Mucosa of descending colon (tissue), 3 donors: ENCODE measurements at regions of chr2 and their contacts with region 1.

Region 1: GRCh38 chr2:229586746-229587705 is 127.3 kb downstream of the DNER start:
- DNase-seq: peak; percentile 58 to 90 (median 80)
- ATAC-seq: peak; percentile 91
- H3K4me3 ChIP-seq: no peak overlapping the region
- H3K4me1 ChIP-seq: no peaks in the 10 kb centered on the region
- CTCF ChIP-seq: peak; percentile 59

Region 2: DNA sequence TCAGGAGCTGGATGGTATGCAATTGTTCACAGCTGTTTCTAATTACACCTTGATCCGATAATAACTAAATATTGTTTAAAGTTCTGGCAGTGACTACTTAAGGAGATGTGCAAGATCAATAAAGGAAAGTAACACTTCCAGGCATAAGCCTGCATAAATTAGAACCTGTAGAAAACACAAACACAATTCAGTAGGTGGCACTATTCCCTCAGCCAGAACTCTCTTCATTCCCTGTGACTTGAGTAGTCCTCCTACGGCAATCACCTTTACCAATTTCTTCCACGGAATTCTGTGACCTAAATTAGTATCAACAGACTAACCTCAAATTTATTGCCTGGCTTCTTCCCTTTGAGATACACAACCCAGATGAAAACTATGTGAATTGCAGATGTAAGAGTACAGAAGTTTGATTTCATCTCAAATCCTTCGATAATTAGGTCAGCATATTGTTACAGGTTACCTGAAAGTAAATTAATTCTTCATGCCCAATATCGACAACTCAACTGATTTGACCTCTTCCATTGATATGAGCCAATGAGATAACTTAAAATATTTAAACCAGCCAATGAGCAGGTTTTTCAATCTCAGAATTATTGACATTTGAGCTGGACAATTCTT is 453.8 kb before region 1 on chr2:
- intact Hi-C with region 1: loop called in 1 of 2 experiments (anchors 5 kb)
- DNase-seq: peak in 1 of 3 donors; percentile 69
- ATAC-seq: peak; percentile 49
- H3K4me3 ChIP-seq: no peak overlapping the region
- H3K4me1 ChIP-seq: no peaks in the 10 kb centered on the region
- CTCF ChIP-seq: peak; percentile 17

Region 3: GRCh38 chr2:229431327-229431954 is 155.6 kb before region 1 on chr2:
- intact Hi-C with region 1: loop called in 1 of 2 experiments (anchors 5 kb)
- DNase-seq: no peak
- ATAC-seq: no peak
- H3K4me3 ChIP-seq: no peak overlapping the region
- H3K4me1 ChIP-seq: no peaks in the 10 kb centered on the region
- CTCF ChIP-seq: no peak

Region 4: DNA sequence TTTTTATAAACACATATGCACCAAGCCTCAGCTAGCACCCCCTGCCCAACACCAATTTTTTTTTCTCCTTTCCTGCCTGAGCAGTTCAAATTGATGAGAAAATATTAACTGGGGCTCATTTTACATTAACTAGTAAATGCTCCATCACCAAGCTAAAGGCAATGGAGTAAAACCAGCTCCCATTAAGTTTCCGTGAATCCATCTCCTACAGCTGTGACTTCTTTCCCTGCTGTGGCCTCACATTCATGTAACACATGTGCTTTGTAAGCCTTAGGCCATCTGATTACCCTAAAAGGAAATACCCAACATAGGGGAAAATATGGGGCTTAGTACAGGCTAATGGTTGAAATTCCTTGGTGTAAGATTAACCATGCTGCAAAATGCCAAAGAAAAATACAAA is 66.5 kb after region 1 on chr2:
- intact Hi-C with region 1: no loop called
- DNase-seq: no peak
- ATAC-seq: no peak
- H3K4me3 ChIP-seq: no peak overlapping the region
- H3K4me1 ChIP-seq: no peaks in the 10 kb centered on the region
- CTCF ChIP-seq: no peak